ENCODE measurements at regions of chrX and their contacts with region 1.

Region 1: GRCh38 chrX:24465532-24465865 is 413 bp downstream of the PDK3 start:
- DNase-seq: no peak
- H3K4me3 ChIP-seq: peak overlapping the region; percentile 61
- H3K27ac ChIP-seq: no peak overlapping the region
- H3K27me3 ChIP-seq: peaks cover 3% of the 10 kb centered on the region
- CTCF ChIP-seq: no peak

Region 2: DNA sequence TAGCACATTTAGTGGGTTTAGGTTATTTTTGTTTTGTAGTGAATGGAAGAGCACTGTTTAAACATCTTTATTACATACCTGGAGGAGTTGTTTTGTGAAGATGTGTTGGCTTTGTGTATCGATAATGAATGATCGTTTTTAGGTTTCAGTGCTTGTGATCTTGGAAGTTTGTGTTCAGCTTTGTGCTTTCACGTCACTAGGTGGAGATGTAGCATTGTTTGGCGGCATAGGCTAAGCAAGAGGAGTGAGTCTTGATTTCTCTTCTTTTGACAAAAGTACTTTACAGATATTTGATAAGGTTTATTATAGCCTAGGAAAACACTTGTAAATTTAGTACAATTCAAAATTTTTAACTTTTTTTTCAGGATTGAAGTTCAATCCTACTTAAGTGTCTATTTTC is 49.9 kb after region 1 on chrX:
- CTCF ChIA-PET with region 1: interaction called, 10 read pairs
- POLR2A ChIA-PET with region 1: no interaction called
- DNase-seq: no peak
- H3K4me3 ChIP-seq: no peak overlapping the region
- H3K27ac ChIP-seq: no peak overlapping the region
- H3K27me3 ChIP-seq: no peaks in the 10 kb centered on the region
- CTCF ChIP-seq: peak; percentile 27

Measured in AG04450 (cell line).